ENCODE measurements at regions of chr9 and their contacts with region 1.

Region 1: DNA sequence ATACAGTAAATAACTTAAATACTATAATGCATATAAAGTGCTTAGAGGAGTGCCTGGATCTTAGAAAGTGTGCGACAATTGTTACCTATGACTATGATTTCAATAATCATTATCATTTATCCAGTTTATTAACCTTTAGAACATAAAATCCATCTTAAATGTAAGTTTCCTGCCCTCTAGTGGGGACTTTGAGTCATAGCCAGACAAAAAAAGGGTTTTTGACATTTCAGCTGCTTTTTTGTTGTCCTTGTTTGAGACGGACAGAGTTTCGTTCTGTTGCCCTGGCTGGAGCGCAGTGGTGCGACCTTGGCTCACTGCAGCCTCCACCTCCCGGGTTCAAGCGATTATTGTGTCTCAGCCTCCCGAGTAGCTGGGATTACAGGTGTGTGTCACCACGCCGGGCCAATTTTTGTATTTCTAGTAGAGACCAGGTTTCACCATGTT is 9.7 kb upstream of the C9orf152 start:
- DNase-seq: no peak
- ATAC-seq: no peak

Region 2: DNA sequence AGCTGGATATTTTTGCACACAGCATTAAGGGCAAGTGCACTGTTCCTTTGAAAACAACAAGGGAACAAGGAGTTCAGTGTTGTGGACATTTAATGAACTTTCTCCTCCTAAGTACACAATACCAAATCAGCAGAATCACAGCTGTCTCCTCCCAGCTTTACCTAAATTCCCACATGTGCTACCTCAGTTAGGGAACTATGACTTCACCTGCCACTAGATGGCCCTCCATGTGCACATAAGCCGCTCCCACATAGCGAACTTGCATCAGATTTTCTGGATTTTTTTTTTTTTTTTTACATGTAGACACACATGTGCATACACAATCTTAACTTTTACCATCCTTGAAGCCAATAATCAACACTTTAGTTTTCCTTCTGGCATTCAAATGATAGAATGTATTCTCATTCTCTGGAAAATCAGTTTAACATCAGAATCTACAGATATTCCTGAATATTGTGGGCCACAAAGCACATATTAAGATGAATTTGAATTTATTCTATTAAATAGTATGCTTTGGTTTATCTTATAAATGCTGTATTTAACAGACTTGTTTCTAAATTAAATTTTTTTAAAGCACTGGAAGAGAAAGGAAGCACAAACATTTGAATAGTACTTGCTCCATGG is 314.1 kb before region 1 on chr9:
- intact Hi-C with region 1: loop called (anchors 5 kb)
- DNase-seq: no peak
- ATAC-seq: peak; percentile 56

Region 3: DNA sequence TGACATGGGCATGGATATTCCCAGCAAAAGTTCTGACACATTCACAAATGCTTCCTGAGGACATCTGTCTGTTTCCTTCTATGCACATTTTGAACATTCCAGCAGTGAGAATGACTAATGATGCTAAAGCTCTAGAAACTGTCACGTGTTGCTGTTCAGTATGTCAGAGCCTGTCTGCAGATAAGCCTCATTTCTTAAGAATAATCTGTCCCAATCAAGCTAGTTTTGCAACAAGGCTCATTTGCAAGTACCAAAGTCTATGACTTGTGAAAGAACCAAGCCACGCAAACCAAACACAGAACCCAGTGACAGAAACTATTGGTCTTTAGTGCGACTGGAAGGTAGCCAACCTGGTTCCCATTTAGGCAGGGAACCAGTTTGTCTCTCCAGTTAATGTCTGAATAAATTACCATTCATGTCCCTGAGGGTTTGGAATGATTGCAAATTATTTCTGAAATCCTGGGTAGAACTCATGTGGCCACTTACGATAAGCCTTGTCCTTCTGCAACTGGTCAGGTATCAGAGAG is 188.2 kb before region 1 on chr9:
- intact Hi-C with region 1: no loop called
- DNase-seq: no peak
- ATAC-seq: peak; percentile 71

Region 4: GRCh38 chr9:110183208-110184145 is 34.2 kb before region 1 on chr9:
- intact Hi-C with region 1: loop called (anchors 5 kb)
- DNase-seq: no peak
- ATAC-seq: peak; percentile 48

Region 5: DNA sequence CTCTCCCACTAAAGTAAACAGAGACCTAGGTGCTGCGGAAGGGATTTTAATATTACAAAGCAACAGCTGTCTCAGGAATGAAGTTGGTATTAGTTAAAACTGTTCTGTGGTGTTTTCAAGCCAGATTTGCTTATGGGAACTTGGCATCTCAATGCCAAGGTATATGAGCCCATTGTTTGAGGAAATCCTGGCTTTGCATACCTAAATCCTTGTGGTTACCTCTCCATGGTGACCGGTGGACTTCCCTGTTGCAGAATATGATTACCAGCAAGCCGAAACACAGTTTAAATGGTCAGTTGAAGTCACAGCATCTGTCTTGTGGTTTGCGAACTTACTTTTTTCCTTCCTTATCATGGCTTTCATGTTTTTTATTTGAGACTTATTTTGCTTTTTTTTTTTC is 182.3 kb after region 1 on chr9:
- intact Hi-C with region 1: no loop called
- DNase-seq: no peak
- ATAC-seq: no peak